Activated T-helper 1 cell treated with anti-CD3 and anti-CD28 coated beads, Interleukin-12 subunit alpha, Interleukin-12 subunit beta, Interleukin-2, Interleukin-4 antibody, amounts not matched to agents 30 ng/mL and 10 ng/mL and 1 ng/mL, durations not matched to agents 14 hours and 24 hours and 36 hours (primary cell): ENCODE measurements at regions of chr1 and their contacts with region 1.

Region 1: DNA sequence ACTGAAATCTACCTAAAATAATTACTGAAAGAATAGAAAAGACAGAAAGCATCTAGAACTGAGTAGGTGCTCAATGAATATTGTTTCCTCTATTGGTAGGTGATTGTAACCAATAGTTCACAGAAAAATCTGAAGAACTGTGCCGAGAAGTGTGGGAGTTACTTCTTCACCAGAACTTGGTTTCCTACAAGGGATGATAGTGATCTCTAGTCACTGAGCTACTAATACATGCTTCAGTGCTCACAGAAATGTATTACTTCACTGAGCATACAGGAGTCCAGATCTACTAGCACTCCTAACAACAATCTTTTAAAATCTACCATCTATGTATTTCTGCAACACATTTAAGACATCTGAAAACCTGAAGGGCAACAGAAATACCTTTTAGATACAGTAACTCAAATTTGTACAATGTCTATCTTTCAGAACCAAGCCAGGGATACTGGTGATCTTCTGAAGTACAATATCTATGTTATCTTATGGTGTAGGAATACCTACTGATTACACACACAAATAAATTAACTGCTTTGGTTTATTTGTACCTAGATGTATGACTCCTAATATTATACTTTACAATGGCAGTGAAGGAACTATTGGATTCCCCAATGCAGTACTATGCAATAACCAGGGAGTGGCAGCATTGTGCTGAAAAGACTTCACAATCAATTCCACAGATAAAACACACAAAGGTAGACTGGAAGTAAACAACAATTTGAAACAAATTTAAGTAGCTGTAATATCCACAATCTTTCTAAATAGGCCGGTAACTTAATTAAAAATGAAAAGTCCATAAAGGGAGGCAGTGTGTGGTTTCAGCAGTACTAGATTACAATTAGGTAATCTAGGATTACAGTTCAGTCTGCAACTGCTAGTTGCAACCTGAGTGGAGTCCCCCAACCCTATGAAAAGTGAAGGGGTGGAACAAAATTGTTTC is 243.0 kb downstream of the SLC45A1 start:
- DNase-seq: no peak
- H3K4me3 Mint-ChIP-seq: peak overlapping the region; percentile 32
- H3K27ac Mint-ChIP-seq: peak overlapping the region; percentile 78
- H3K4me1 Mint-ChIP-seq: peaks cover 57% of the 10 kb centered on the region
- H3K27me3 Mint-ChIP-seq: no peaks in the 10 kb centered on the region

Region 2: GRCh38 chr1:8604041-8604945 is 43.4 kb after region 1 on chr1:
- intact Hi-C with region 1: loop called (anchors 1 kb)
- DNase-seq: peak; percentile 34
- H3K4me3 Mint-ChIP-seq: peak overlapping the region; percentile 61
- H3K27ac Mint-ChIP-seq: peak overlapping the region; percentile 94
- H3K4me1 Mint-ChIP-seq: peaks cover 48% of the 10 kb centered on the region
- H3K27me3 Mint-ChIP-seq: no peaks in the 10 kb centered on the region

Region 3: GRCh38 chr1:8702850-8703810 is 142.3 kb after region 1 on chr1:
- intact Hi-C with region 1: loop called (anchors 1 kb)
- DNase-seq: peak; percentile 69
- H3K4me3 Mint-ChIP-seq: peak overlapping the region; percentile 97
- H3K27ac Mint-ChIP-seq: peak overlapping the region; percentile 89
- H3K4me1 Mint-ChIP-seq: peaks cover 58% of the 10 kb centered on the region
- H3K27me3 Mint-ChIP-seq: peaks cover 3% of the 10 kb centered on the region

Region 4: DNA sequence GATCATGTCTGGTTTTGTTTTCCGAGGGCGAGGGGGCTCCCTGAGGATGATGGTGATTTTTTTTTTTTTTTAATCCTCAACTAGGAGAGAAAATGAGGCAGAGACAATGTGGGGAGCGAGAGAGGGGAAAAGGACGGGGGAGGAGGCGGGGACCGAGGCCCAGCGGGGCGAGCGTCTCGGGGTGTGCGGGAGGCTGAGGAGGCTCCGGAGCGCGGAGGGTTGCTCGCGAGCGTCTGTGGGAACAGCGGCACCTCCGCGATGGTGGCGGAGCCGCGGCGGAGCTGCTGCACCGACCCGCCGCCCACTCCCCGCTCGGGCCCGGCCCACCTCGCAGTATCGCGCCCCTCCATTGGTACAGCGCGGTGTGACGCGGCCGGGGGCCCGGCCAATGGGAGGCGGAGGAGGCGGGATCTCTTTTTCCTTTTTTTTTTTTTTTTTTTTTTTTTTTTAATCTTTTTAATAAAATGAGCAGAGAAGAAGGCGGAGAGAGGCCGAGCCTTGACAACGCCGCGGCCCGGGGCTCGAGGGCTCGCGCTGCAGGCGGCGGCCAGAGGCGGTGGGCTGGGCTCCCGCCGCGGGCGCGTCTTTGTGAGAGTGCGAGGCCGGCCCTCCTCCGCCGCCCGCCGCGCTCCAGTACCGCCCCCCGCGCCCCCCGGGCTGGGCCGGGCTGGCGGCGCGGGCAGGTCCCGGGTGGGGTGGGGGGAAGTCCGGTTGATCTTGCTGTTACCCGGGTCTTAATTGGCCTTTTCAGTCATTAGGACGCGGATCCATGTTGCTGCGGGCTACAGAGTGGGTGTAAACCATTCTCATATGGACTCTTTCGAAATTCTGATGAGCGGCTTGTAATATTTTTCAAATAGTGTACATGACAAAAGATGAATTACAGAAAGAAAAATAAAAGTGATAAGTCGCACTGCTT is 256.8 kb after region 1 on chr1 and contains the start of gene RERE:
- intact Hi-C with region 1: loop called (anchors 1 kb)
- DNase-seq: peak; percentile 96
- H3K4me3 Mint-ChIP-seq: peak within 1 kb of the TSS; percentile 86
- H3K27ac Mint-ChIP-seq: peak within 1 kb of the TSS; percentile 93
- H3K4me1 Mint-ChIP-seq: peaks cover 44% of the 10 kb centered on the region
- H3K27me3 Mint-ChIP-seq: peaks cover 12% of the 10 kb centered on the region
- total RNA-seq, gene RERE: 82.0 and 90.9 TPM in 2 replicates

Region 5: GRCh38 chr1:9052272-9053049 is 491.6 kb after region 1 on chr1:
- intact Hi-C with region 1: no loop called
- DNase-seq: no peak
- H3K4me3 Mint-ChIP-seq: no peak overlapping the region
- H3K27ac Mint-ChIP-seq: no peak overlapping the region
- H3K4me1 Mint-ChIP-seq: no peaks in the 10 kb centered on the region
- H3K27me3 Mint-ChIP-seq: peaks cover 10% of the 10 kb centered on the region